A673 (cell line): ENCODE measurements at regions of chr4 and their contacts with region 1.

Region 1: DNA sequence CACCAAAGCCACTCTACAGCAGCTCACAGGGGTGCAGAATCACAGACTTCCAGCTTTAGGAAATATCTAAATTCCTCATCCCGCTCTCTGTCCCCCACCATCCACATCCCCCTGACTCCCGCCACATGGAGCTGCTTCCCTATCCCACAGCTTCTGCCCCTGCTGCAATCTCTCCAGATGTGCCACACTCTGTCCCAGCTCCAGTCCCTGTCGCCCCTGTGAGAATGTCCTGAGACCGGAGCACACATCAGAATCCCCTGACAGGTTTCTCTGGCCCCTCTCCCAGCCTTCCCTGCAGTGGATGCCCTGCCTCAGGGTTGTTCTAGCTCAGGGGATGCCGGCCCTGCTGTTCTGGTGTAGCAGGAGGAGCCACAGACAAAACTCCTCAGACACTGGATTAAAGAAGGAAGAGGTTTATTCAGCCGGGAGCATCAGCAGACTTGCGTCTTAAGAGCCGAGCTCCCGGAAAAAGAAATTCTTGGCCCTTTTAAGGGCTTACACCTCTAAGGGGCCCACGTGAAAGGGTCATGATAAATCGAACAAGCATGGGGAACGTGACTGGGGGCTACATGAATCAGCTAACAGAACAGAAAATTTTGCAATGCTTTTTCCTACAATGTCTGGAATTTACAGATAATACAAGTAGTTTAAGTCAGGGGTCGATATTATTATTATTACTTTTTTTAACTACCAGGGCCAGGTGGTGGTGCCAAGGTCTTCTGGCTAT is 6.5 kb upstream of the S100P start:
- DNase-seq: no peak
- H3K4me3 ChIP-seq: no peak overlapping the region
- H3K27ac ChIP-seq: no peak overlapping the region
- H3K4me1 ChIP-seq: no peaks in the 10 kb centered on the region
- H3K27me3 ChIP-seq: no peaks in the 10 kb centered on the region
- CTCF ChIP-seq: no peak

Region 2: GRCh38 chr4:7719354-7720174 is 1032.3 kb after region 1 on chr4:
- CTCF ChIA-PET with region 1: no interaction called
- POLR2A ChIA-PET with region 1: interaction called, 12 read pairs
- intact Hi-C with region 1: no loop called
- DNase-seq: peak; percentile 69
- H3K4me3 ChIP-seq: no peak overlapping the region
- H3K27ac ChIP-seq: no peak overlapping the region
- H3K4me1 ChIP-seq: no peaks in the 10 kb centered on the region
- H3K27me3 ChIP-seq: peaks cover 7% of the 10 kb centered on the region
- CTCF ChIP-seq: peak; percentile 91